ENCODE measurements at regions of chr3 and their contacts with region 1.

Region 1: DNA sequence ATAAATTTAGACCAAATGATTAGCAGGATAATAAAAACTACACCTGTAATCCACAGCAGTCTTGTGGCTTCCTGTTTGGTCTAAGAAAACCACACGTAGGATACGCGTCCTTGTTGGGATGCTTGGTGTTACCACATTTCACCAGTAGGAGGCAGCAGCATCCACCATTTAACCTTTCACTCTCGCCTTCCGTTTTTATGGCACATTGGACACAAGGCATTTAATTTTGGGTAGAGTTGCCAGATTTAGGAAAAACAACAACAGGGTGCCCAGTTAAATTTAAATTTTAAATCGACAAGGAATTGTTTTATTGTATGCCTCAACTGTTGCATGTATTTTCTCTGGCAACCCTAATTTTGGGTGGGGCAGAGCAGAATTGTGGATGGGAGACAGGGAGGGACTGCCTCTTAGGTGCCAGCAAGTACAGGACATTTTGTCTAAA is 6.3 kb downstream of the LRRC31 start:
- DNase-seq: peak; percentile 73
- ATAC-seq: peak; percentile 94
- H3K4me3 ChIP-seq: no peak overlapping the region
- H3K27ac ChIP-seq: no peak overlapping the region
- H3K4me1 ChIP-seq: peaks cover 4 to 5% of the 10 kb centered on the region in 2 experiments; a peak in 3 of 4 replicates
- H3K27me3 ChIP-seq: no peaks in the 10 kb centered on the region
- CTCF ChIP-seq: peak; percentile 82 to 93 (median 83)
- POLR2A ChIP-seq: no peak
- RAD21 ChIP-seq: peak; percentile 90

Region 2: GRCh38 chr3:170021083-170021482 is 157.6 kb after region 1 on chr3:
- CTCF ChIA-PET with region 1: no interaction called
- POLR2A ChIA-PET with region 1: no interaction called
- RAD21 ChIA-PET with region 1: no interaction called
- intact Hi-C with region 1: loop called (anchors 1 kb)
- DNase-seq: no peak
- ATAC-seq: peak; percentile 67; the same call in 1 of the 2 replicates
- H3K4me3 ChIP-seq: no peak overlapping the region
- H3K27ac ChIP-seq: no peak overlapping the region
- H3K4me1 ChIP-seq: no peaks in the 10 kb centered on the region
- H3K27me3 ChIP-seq: no peaks in the 10 kb centered on the region
- CTCF ChIP-seq: peak; percentile 14 to 27 (median 24); a peak in 1 of 6 replicates
- POLR2A ChIP-seq: no peak
- RAD21 ChIP-seq: peak; percentile 46; the same call in 1 of the 2 replicates

Region 3: GRCh38 chr3:170037463-170038433 is 174.3 kb after region 1 on chr3 and contains the start of gene GPR160:
- CTCF ChIA-PET with region 1: no interaction called
- POLR2A ChIA-PET with region 1: no interaction called
- RAD21 ChIA-PET with region 1: no interaction called
- intact Hi-C with region 1: loop called (anchors 5 kb)
- DNase-seq: peak; percentile 64
- ATAC-seq: peak; percentile 92
- H3K4me3 ChIP-seq: peak within 1 kb of the TSS; percentile 60 to 72
- H3K27ac ChIP-seq: peak within 1 kb of the TSS; percentile 39; the same call in 1 of the 2 replicates
- H3K4me1 ChIP-seq: peaks cover 4 to 16% of the 10 kb centered on the region in 2 experiments; a peak in 2 of 4 replicates
- H3K27me3 ChIP-seq: no peaks in the 10 kb centered on the region
- CTCF ChIP-seq: peak; percentile 78 to 81 (median 78)
- POLR2A ChIP-seq: no peak
- RAD21 ChIP-seq: peak; percentile 64
- total RNA-seq, gene GPR160: 9.9 TPM

Region 4: DNA sequence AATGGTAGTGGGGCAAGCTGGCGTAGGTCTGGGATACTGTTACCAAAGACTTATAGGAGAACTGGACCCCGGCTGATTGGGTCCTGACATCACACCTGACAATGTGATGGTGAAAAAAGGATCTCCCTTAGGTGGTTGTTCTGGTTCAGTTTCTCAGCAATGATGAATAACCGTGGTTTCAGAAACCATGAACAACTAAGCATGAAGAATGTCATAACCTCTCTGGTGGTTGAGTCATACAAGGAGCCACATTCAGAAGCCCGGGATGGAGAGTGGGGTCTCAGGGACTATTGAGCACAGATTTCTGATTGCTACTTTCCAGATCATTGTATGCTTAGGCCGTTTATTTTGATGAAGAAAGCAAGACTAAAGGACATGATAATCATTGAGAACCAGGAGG is 191.7 kb after region 1 on chr3:
- CTCF ChIA-PET with region 1: no interaction called
- POLR2A ChIA-PET with region 1: no interaction called
- RAD21 ChIA-PET with region 1: no interaction called
- intact Hi-C with region 1: loop called (anchors 2 kb)
- DNase-seq: no peak
- ATAC-seq: no peak
- H3K4me3 ChIP-seq: no peak overlapping the region
- H3K27ac ChIP-seq: no peak overlapping the region
- H3K4me1 ChIP-seq: no peaks in the 10 kb centered on the region
- H3K27me3 ChIP-seq: no peaks in the 10 kb centered on the region
- CTCF ChIP-seq: no peak
- POLR2A ChIP-seq: no peak
- RAD21 ChIP-seq: no peak

Measured in HCT116 (cell line).